Mucosa of descending colon (tissue), 3 donors: ENCODE measurements at regions of chr11 and their contacts with region 1.

Region 1: DNA sequence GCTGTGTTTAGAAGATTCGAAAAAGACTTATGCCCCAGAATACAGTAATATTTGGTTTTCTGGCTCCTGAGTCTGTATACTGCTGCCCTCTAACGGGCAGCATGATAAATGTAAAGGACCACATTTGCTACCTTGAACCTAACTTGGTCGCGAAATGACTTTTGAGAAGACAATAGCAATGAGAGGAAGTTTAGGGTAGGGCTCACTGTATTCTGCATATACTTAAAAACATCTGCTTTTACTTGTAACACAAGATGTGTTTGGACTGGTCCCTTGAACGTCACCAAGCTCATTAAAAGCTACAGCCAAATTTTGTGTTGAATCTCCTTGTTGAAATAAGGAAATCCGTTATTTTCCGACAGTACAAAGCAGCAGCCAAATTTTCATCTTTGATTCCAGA is 309.1 kb downstream of the SWAP70 start:
- DNase-seq: peak in 1 of 3 donors; percentile 57
- ATAC-seq: peak; percentile 60
- H3K4me3 ChIP-seq: no peak overlapping the region
- H3K4me1 ChIP-seq: no peaks in the 10 kb centered on the region
- CTCF ChIP-seq: peak; percentile 41

Region 2: DNA sequence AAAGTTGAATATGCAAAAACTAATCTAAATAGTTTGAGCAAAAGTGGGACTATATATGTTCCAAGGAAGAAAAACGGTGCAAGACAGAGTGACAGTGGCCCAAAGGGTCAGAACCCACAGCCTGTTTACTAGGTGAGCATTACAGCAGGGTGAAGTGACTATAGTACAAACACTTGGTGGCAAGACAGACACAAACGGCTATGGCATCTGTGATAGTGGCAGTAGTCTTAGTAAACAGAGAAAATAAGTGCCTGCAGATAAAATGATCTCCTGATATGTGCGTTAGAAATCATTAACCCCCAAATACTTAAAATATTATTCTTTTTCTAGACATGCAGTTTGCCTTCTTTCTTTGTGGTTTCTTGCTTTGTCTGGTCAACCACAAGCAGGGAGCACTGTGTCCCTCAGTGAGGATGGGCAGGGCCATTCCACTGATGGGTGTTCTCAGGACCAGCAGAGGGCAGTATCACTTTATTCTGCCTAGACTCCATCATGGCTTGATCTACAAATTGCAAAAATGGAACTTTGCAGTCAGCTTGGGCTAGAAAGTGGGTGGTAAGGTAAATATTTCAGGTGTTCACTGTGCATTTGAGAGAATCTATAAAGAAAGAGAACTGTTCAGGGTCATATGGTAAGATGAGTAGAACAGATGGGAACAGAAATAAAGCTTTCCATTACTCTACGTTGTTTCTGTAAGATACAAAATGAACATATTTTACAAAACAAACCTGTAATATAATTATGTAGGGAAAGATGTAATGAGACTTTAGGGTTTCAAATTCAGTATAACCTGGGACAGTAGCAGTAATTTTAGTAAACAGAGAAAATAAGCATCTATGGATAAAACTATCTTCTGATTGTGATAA is 110.9 kb before region 1 on chr11:
- intact Hi-C with region 1: loop called in 1 of 2 experiments (anchors 10 kb)
- DNase-seq: peak in 2 of 3 donors; percentile 39 to 81
- ATAC-seq: peak; percentile 93
- H3K4me3 ChIP-seq: no peak overlapping the region
- H3K4me1 ChIP-seq: no peaks in the 10 kb centered on the region
- CTCF ChIP-seq: peak; percentile 49